Mammary epithelial cell (primary cell): ENCODE measurements at regions of chr1 and their contacts with region 1.

Region 1: DNA sequence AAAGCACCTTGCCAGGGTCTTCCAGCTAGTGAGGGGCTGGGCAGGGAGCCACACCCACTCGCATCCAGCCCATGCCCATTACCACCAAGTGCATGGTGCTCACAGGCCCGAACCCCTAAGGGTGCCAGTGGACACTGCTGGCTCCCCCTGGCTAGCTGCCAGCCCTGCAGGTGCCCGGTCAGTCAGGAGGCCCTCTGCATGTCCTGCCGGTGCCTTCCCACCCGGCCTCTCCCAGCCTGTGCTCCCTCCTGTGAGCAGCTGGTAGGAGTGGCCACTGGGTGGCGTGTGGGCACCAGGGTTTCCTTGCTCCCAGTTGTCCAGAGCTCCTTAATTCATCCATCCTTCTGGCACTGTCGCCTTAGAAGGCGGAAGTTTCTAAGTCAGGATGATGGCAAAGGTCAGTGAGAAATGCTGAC is 33.4 kb downstream of the QSOX1 start:
- DNase-seq: peak; percentile 50
- H3K4me3 ChIP-seq: no peak overlapping the region
- H3K27ac ChIP-seq: no peak overlapping the region
- H3K4me1 ChIP-seq: no peaks in the 10 kb centered on the region
- H3K27me3 ChIP-seq: no peaks in the 10 kb centered on the region
- CTCF ChIP-seq: peak; percentile 81 to 89

Region 2: GRCh38 chr1:180080433-180080832 is 107.7 kb before region 1 on chr1:
- CTCF ChIA-PET with region 1: no interaction called
- dilution Hi-C with region 1: no loop called
- in situ Hi-C with region 1: no loop called
- intact Hi-C with region 1: no loop called
- DNase-seq: peak; percentile 54
- H3K4me3 ChIP-seq: no peak overlapping the region
- H3K27ac ChIP-seq: no peak overlapping the region
- H3K4me1 ChIP-seq: no peaks in the 10 kb centered on the region
- H3K27me3 ChIP-seq: no peaks in the 10 kb centered on the region
- CTCF ChIP-seq: no peak

Region 3: GRCh38 chr1:180229152-180229973 is 41.3 kb after region 1 on chr1:
- CTCF ChIA-PET with region 1: no interaction called
- dilution Hi-C with region 1: no loop called
- in situ Hi-C with region 1: no loop called
- intact Hi-C with region 1: loop called (anchors 5 kb)
- DNase-seq: peak; percentile 43
- H3K4me3 ChIP-seq: peak overlapping the region; percentile 43 to 62 (median 53)
- H3K27ac ChIP-seq: no peak overlapping the region
- H3K4me1 ChIP-seq: peaks cover 18% of the 10 kb centered on the region
- H3K27me3 ChIP-seq: peaks cover 40% of the 10 kb centered on the region
- CTCF ChIP-seq: no peak

Region 4: GRCh38 chr1:180252638-180253536 is 64.8 kb after region 1 on chr1:
- CTCF ChIA-PET with region 1: no interaction called
- dilution Hi-C with region 1: no loop called
- in situ Hi-C with region 1: no loop called
- intact Hi-C with region 1: loop called (anchors 1 kb)
- DNase-seq: peak; percentile 47
- H3K4me3 ChIP-seq: no peak overlapping the region
- H3K27ac ChIP-seq: no peak overlapping the region
- H3K4me1 ChIP-seq: no peaks in the 10 kb centered on the region
- H3K27me3 ChIP-seq: no peaks in the 10 kb centered on the region
- CTCF ChIP-seq: peak; percentile 92 to 93

Region 5: DNA sequence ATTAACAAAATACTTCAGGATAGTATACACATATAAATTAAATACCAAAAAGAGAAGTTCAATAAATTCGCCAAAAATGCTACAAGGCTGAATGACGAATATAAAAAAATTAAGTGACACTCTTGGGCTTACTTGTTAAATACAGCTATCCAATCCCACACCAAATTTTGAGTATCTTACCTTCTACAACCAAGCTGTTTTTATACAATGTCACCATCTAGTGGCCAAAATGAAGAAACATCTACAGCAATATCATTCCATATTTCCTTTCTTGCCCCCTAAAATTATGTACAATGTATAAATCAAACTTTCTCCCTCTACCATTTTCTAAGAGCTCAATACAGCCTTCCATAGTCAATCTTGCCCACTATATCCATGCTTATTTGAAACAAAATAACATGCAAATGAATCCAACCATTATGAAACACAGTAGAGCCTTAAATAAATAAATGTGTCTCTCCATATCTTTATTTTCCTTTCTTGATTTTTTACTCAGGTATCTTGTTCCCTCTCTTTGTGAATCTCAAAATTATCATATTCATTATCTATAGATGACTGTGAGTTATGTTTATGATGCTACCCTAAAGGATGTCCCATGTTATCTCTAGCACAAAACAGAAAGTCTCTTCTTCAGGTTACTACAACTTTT is 228.0 kb after region 1 on chr1:
- CTCF ChIA-PET with region 1: no interaction called
- dilution Hi-C with region 1: no loop called
- in situ Hi-C with region 1: no loop called
- intact Hi-C with region 1: loop called (anchors 1 kb)
- DNase-seq: peak; percentile 8
- H3K4me3 ChIP-seq: no peak overlapping the region
- H3K27ac ChIP-seq: no peak overlapping the region
- H3K4me1 ChIP-seq: no peaks in the 10 kb centered on the region
- H3K27me3 ChIP-seq: no peaks in the 10 kb centered on the region
- CTCF ChIP-seq: peak; percentile 54 to 63

Region 6: GRCh38 chr1:180470031-180470430 is 281.9 kb after region 1 on chr1:
- CTCF ChIA-PET with region 1: no interaction called
- dilution Hi-C with region 1: no loop called
- in situ Hi-C with region 1: loop called in 1 of 2 experiments (anchors 10 kb)
- intact Hi-C with region 1: no loop called
- DNase-seq: no peak
- H3K4me3 ChIP-seq: no peak overlapping the region
- H3K27ac ChIP-seq: no peak overlapping the region
- H3K4me1 ChIP-seq: no peaks in the 10 kb centered on the region
- H3K27me3 ChIP-seq: no peaks in the 10 kb centered on the region
- CTCF ChIP-seq: no peak

Region 7: GRCh38 chr1:180482425-180483275 is 294.6 kb after region 1 on chr1:
- CTCF ChIA-PET with region 1: no interaction called
- dilution Hi-C with region 1: no loop called
- in situ Hi-C with region 1: loop called in 1 of 2 experiments (anchors 10 kb)
- intact Hi-C with region 1: loop called (anchors 1 kb)
- DNase-seq: peak; percentile 41
- H3K4me3 ChIP-seq: peak overlapping the region in 1 of 3 experiments; percentile 22
- H3K27ac ChIP-seq: no peak overlapping the region
- H3K4me1 ChIP-seq: no peaks in the 10 kb centered on the region
- H3K27me3 ChIP-seq: no peaks in the 10 kb centered on the region
- CTCF ChIP-seq: peak; percentile 64 to 80

Region 8: GRCh38 chr1:181743878-181744312 is 1555.8 kb after region 1 on chr1:
- CTCF ChIA-PET with region 1: no interaction called
- dilution Hi-C with region 1: no loop called
- in situ Hi-C with region 1: no loop called
- intact Hi-C with region 1: no loop called
- DNase-seq: no peak
- H3K4me3 ChIP-seq: no peak overlapping the region
- H3K27ac ChIP-seq: no peak overlapping the region
- H3K4me1 ChIP-seq: no peaks in the 10 kb centered on the region
- H3K27me3 ChIP-seq: no peaks in the 10 kb centered on the region
- CTCF ChIP-seq: no peak